Ascending aorta (tissue), 2 donors: ENCODE measurements at regions of chr6 and their contacts with region 1.

Region 1: DNA sequence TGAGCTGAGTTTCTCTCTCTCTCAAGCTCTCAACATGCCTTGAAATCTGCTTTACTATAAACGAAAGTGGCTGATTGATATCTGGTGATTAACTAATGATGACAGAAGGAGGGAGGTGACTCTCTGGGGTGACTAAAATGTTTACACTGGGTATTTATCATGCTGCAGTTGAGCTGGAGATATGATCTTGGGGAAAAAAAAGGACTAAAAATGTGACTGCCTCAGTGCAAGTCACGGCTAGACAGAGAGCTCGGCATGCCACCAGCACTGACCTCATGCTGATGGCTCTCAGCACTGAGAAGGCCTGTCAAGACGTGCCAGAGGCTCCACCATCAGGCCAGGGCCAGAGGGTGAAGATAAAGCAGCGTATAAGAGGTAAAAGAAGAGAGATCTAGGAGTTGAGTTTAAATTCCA is 103.1 kb upstream of the SPACA1 start:
- DNase-seq: peak; percentile 63 to 88
- H3K4me3 ChIP-seq: peak overlapping the region in 1 of 2 donors; percentile 18
- H3K27ac ChIP-seq: peak overlapping the region; percentile 73 to 80
- H3K4me1 ChIP-seq: peaks cover 3 to 14% of the 10 kb centered on the region in 2 donors
- H3K27me3 ChIP-seq: no peaks in the 10 kb centered on the region
- CTCF ChIP-seq: peak in 2 of 3 experiments; percentile 13 to 46

Region 2: GRCh38 chr6:87897663-87898062 is 46.9 kb before region 1 on chr6:
- intact Hi-C with region 1: no loop called
- DNase-seq: no peak
- H3K4me3 ChIP-seq: no peak overlapping the region
- H3K27ac ChIP-seq: no peak overlapping the region
- H3K4me1 ChIP-seq: no peaks in the 10 kb centered on the region
- H3K27me3 ChIP-seq: no peaks in the 10 kb centered on the region
- CTCF ChIP-seq: no peak

Region 3: GRCh38 chr6:88141561-88142296 is 197.2 kb after region 1 on chr6:
- intact Hi-C with region 1: no loop called
- DNase-seq: no peak
- H3K4me3 ChIP-seq: no peak overlapping the region
- H3K27ac ChIP-seq: no peak overlapping the region
- H3K4me1 ChIP-seq: no peaks in the 10 kb centered on the region
- H3K27me3 ChIP-seq: no peaks in the 10 kb centered on the region
- CTCF ChIP-seq: no peak

Region 4: GRCh38 chr6:88360203-88360797 is 415.8 kb after region 1 on chr6:
- intact Hi-C with region 1: loop called (anchors 10 kb)
- DNase-seq: no peak
- H3K4me3 ChIP-seq: no peak overlapping the region
- H3K27ac ChIP-seq: no peak overlapping the region
- H3K4me1 ChIP-seq: no peaks in the 10 kb centered on the region
- H3K27me3 ChIP-seq: no peaks in the 10 kb centered on the region
- CTCF ChIP-seq: no peak

Region 5: GRCh38 chr6:88492824-88493223 is 548.3 kb after region 1 on chr6:
- intact Hi-C with region 1: loop called (anchors 5 kb)
- DNase-seq: no peak
- H3K4me3 ChIP-seq: no peak overlapping the region
- H3K27ac ChIP-seq: no peak overlapping the region
- H3K4me1 ChIP-seq: no peaks in the 10 kb centered on the region
- H3K27me3 ChIP-seq: no peaks in the 10 kb centered on the region
- CTCF ChIP-seq: peak in 2 of 3 experiments; percentile 26 to 31

Region 6: DNA sequence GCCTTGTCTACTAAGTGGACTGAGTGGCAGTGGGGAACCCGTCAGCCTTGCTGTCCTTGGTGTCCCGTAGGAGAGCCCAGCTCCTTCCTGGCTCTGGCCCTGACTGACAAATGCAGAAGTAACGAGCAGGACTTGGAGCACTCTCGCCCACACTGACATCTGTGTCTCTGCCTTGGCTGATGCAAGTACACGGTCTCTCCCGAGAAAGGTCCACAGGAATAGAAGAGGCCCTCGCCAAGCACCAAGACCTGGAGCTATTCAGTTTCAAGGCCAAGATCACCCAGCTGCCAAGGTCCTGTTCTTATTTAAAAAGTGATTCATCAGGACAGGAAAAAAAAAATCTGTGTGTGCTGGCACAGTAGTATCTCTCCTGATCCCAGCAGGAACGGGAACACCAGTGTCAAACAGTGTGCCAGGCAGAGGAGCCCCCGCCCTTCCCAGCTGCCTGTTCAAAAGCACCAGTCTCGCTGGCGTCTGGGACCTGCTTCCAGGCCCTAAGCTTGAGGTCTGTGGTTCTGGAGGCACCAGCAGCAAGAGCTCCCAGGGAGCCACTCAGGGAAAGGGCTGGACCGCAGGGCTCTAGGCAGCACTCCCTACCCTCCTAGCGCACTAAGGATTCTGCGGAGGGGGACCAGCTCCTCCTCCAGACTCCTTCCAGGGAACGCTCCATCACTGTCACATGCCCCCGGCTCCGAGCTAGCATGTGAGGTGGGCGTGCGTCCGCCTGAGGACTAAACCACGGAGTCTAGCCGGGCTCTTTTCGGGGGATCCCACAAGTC is 642.0 kb after region 1 on chr6:
- intact Hi-C with region 1: loop called (anchors 5 kb)
- DNase-seq: peak; percentile 29 to 88
- H3K4me3 ChIP-seq: peak overlapping the region in 1 of 2 donors; percentile 50
- H3K27ac ChIP-seq: peak overlapping the region; percentile 64 to 76
- H3K4me1 ChIP-seq: peaks cover 8 to 10% of the 10 kb centered on the region in 2 donors
- H3K27me3 ChIP-seq: no peaks in the 10 kb centered on the region
- CTCF ChIP-seq: no peak